Activated B cell treated with CpG ODN at 0.5 μM for 24 hours (primary cell): ENCODE measurements at regions of chr2 and their contacts with region 1.

Region 1: DNA sequence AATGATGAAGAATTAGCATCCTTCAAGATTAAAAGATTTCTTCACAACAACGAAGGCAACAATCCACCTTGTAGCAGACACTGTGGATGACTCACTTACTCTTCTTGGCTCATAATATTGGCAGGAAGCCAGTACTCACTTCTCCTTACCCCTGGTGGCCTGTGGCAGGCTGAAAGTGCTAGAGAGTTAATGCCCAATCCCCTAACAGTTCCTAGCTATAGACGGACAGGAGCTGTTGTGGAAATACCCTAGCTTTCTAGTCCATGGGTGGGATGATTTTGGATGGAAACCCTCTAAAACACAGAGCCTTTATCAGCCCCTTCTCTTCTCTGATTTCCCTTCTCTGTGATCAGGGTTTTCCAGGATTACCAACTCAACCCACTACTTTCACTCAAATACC is 128.6 kb upstream of the NYAP2 start:
- DNase-seq: peak; percentile 19
- ATAC-seq: peak; percentile 98
- H3K4me3 Mint-ChIP-seq: no peak overlapping the region
- H3K27ac Mint-ChIP-seq: peak overlapping the region; percentile 30
- H3K4me1 Mint-ChIP-seq: peaks cover 39% of the 10 kb centered on the region
- H3K27me3 Mint-ChIP-seq: no peaks in the 10 kb centered on the region
- CTCF ChIP-seq: no peak

Region 2: GRCh38 chr2:224832207-224832606 is 438.7 kb before region 1 on chr2:
- CTCF ChIA-PET with region 1: no interaction called
- POLR2A ChIA-PET with region 1: no interaction called
- intact Hi-C with region 1: no loop called
- DNase-seq: no peak
- ATAC-seq: no peak
- H3K4me3 Mint-ChIP-seq: no peak overlapping the region
- H3K27ac Mint-ChIP-seq: no peak overlapping the region
- H3K4me1 Mint-ChIP-seq: no peaks in the 10 kb centered on the region
- H3K27me3 Mint-ChIP-seq: no peaks in the 10 kb centered on the region
- CTCF ChIP-seq: no peak

Region 3: GRCh38 chr2:225223301-225223700 is 47.6 kb before region 1 on chr2:
- CTCF ChIA-PET with region 1: no interaction called
- POLR2A ChIA-PET with region 1: no interaction called
- intact Hi-C with region 1: no loop called
- DNase-seq: no peak
- ATAC-seq: no peak
- H3K4me3 Mint-ChIP-seq: no peak overlapping the region
- H3K27ac Mint-ChIP-seq: no peak overlapping the region
- H3K4me1 Mint-ChIP-seq: no peaks in the 10 kb centered on the region
- H3K27me3 Mint-ChIP-seq: no peaks in the 10 kb centered on the region
- CTCF ChIP-seq: no peak

Region 4: GRCh38 chr2:225282858-225283710 is 12.2 kb after region 1 on chr2:
- CTCF ChIA-PET with region 1: no interaction called
- POLR2A ChIA-PET with region 1: no interaction called
- intact Hi-C with region 1: loop called (anchors 1 kb)
- DNase-seq: no peak
- ATAC-seq: peak; percentile 61
- H3K4me3 Mint-ChIP-seq: no peak overlapping the region
- H3K27ac Mint-ChIP-seq: no peak overlapping the region
- H3K4me1 Mint-ChIP-seq: no peaks in the 10 kb centered on the region
- H3K27me3 Mint-ChIP-seq: no peaks in the 10 kb centered on the region
- CTCF ChIP-seq: no peak